ENCODE measurements at regions of chr11 and their contacts with region 1.

Region 1: DNA sequence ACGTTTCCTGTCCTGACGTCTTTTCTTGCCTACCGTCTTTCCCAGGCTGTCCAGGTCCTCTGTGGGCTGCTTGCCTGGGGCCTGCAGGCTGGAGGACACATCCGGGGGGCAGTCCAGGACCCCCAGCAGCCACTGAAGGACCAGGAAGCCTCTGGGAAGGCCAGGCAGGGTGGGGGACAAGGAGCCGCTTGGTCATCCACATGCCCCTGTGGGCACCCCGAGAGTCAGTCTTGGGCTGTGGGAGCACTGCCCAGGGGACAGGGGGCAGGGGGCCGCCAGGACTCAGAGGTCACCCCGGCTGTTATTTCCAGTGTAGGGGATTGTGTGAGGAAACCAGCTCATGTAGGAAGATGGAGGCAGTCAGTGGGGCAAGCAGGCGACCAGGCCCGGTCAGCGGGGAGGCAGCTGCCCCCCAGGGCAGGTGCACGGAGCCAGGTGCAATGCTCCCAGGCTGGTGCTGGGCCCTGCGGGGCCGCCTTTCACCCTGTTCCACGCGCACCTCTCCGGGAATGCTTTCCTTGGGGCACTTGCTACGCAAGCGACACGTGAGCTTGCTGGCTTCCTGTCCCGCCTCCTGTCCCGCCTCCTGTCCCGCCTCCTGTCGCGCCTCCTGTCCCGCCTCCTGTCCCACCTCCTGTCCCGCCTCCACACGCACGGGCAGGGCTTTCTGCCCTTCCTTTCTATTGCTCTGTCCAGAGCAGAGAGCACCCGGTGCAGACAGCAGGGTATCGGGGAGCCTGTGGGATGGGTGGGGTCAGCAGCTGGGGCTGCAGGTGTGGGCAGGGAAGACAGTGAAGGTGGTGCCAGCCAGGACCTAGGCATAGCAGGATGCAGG is 39.5 kb downstream of the MUC5B start:
- DNase-seq: peak; percentile 94
- H3K4me3 Mint-ChIP-seq: peak overlapping the region; percentile 78
- H3K27ac Mint-ChIP-seq: peak overlapping the region; percentile 86
- H3K4me1 Mint-ChIP-seq: peaks cover 6% of the 10 kb centered on the region
- H3K27me3 Mint-ChIP-seq: no peaks in the 10 kb centered on the region

Region 2: GRCh38 chr11:1298695-1299492 is 36.5 kb after region 1 on chr11:
- intact Hi-C with region 1: no loop called
- DNase-seq: no peak
- H3K4me3 Mint-ChIP-seq: no peak overlapping the region
- H3K27ac Mint-ChIP-seq: no peak overlapping the region
- H3K4me1 Mint-ChIP-seq: no peaks in the 10 kb centered on the region
- H3K27me3 Mint-ChIP-seq: no peaks in the 10 kb centered on the region

Region 3: DNA sequence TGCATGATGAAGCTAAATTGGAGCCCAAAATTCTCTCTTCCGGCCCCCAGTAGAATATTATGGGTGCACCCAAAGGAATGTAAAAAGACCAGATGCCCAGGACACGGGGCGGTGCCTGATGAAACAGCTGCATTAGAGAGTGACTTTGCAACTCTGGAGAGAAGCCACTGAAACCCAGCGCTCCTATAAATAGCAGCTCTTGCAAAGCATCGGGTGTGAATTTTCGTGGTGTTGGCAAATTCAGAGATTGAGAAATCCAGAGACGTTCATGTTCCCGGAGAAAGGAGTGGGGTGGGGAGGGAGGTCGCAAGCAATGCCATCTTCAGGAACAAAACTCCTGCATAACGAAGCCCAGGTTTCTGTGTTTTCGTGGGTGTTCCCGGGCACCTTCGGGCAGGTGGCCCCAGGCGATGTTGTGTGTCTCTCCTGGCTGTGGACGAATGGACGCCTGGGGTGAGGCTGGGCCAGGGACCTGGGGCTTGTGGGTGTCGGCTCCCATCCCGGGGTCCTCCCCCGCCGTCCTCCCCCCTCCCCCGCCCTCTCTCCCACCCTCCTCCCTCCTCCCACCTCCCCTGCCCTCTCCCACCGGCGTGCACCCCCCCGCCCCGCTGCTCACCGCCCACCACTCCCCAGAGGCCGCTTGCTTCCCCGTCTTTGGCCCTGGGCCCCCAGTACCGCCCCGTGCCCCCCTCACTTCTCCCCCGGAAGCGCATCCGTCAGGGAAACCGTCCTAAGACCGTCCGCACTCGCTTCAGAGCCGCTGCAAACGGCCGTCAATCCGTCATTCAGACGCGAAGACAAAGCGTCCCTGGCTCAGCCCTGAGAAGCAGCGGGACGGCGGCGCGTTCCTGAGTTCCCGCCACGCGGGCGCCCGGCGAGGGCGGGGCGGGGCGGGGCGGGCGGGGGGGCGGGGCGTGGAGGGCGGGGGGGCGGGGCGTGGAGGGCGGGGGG is 73.7 kb after region 1 on chr11:
- intact Hi-C with region 1: loop called (anchors 5 kb)
- DNase-seq: peak; percentile 86
- H3K4me3 Mint-ChIP-seq: peak overlapping the region; percentile 80
- H3K27ac Mint-ChIP-seq: peak overlapping the region; percentile 80
- H3K4me1 Mint-ChIP-seq: peaks cover 13% of the 10 kb centered on the region
- H3K27me3 Mint-ChIP-seq: peaks cover 18% of the 10 kb centered on the region

Region 4: DNA sequence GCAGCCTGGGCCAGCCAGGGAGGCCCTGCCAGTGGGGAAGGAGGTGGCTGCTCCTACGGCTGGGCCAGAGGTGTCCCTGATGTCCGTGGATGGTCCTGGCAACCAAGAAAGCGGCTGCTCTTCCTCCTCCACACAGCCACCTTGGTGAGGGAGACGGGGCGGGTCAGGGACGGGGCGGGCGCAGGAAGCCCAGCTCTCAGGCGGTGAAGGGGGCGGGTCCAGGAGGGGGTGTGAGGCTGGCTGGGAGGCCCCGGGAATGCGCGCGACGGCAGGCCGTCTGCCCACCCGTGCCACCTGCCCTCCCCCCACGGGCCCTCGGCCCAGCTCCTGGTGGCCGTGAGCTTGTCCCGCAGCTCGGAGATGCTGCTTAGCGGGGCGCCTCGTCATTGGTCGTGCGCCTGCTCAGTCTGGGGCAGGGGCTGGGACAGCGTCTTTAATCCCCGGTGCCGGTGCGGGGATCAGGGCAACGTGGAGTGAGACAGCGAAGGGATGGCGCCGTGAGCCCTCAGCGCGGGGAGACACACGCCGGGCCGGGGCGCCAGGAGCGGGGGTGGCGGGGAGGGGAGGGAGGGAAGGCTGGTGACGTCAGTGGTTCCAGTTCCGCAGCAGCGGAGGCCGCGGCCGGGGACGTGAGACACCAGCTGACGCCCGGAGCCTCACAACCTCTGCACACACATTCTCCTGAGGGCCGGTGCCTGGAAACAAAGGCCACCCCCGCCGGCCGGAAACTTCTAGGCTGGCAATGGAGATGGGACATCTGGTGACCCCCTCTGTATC is 120.6 kb after region 1 on chr11:
- intact Hi-C with region 1: loop called (anchors 5 kb)
- DNase-seq: peak; percentile 88
- H3K4me3 Mint-ChIP-seq: peak overlapping the region; percentile 83
- H3K27ac Mint-ChIP-seq: peak overlapping the region; percentile 86
- H3K4me1 Mint-ChIP-seq: peaks cover 12% of the 10 kb centered on the region
- H3K27me3 Mint-ChIP-seq: peaks cover 31% of the 10 kb centered on the region

Measured in activated CD4-positive, alpha-beta T cell treated with anti-CD3 and anti-CD28 coated beads, Interleukin-2, amount 10 ng/mL, durations not matched to agents 24 days and 14 days (primary cell).